ENCODE measurements at regions of chr9 and their contacts with region 1.

Region 1: GRCh38 chr9:125200210-125201047 is at the start of gene RABEPK:
- DNase-seq: peak; percentile 88 to 91 (median 88)
- H3K4me3 ChIP-seq: peak within 1 kb of the TSS; percentile 74 to 92 (median 88)
- H3K4me3 Mint-ChIP-seq: peak within 1 kb of the TSS; percentile 93 to 95
- H3K27ac ChIP-seq: peak within 1 kb of the TSS; percentile 98 to 100
- H3K27ac Mint-ChIP-seq: peak within 1 kb of the TSS; percentile 95 to 99 (median 97)
- H3K4me1 ChIP-seq: peaks cover 11 to 17% of the 10 kb centered on the region in 2 donors
- H3K4me1 Mint-ChIP-seq: peaks cover 11% of the 10 kb centered on the region
- H3K27me3 ChIP-seq: no peaks in the 10 kb centered on the region
- H3K27me3 Mint-ChIP-seq: peaks cover 0 to 3% (median 2%) of the 10 kb centered on the region in 3 donors
- CTCF ChIP-seq: no peak
- polyA plus RNA-seq, gene RABEPK: 9.5 to 18.5 (median 17.5) TPM

Region 2: DNA sequence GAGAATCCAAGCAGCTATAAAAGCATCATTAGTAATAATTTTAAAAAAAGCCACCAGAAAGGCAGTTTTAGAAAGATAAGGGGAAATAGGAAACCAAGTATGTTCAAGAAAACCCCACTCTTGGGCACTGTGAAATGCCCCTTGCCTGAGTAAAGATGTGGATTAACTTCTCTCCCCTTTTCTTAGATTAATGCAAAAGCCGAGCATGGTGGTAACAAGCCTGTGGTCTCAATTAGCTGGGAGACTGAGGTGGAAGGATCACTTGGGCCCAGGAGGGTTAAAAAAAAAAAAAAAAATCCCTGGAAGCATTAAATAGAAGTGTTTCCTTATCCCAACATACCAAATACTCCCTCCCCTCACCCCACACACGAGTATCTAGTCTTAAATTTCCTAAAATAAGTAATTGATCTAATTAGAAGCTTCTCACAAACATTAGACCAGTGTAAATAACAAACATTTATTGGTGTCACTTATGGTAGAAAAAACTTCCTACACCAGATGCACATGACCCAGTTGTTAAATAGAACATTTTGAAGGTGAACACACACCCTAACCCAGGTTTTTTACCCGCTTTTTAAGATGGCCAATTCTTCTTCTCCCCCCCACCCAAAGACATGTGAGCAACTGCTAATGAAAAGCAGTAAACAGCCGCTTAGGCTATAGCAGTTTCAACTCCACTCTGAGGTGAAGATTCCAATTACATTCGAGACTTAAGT is 35.5 kb after region 1 on chr9:
- intact Hi-C with region 1: loop called in 1 of 2 experiments (anchors 5 kb)
- DNase-seq: no peak
- H3K4me3 ChIP-seq: no peak overlapping the region
- H3K4me3 Mint-ChIP-seq: peak overlapping the region in 1 of 2 donors; percentile 24
- H3K27ac ChIP-seq: no peak overlapping the region
- H3K27ac Mint-ChIP-seq: peak overlapping the region in 3 of 7 donors; percentile 1 to 63 (median 24)
- H3K4me1 ChIP-seq: peaks cover 20 to 47% of the 10 kb centered on the region in 2 donors
- H3K4me1 Mint-ChIP-seq: peaks cover 41% of the 10 kb centered on the region
- H3K27me3 ChIP-seq: no peaks in the 10 kb centered on the region
- H3K27me3 Mint-ChIP-seq: no peaks in the 10 kb centered on the region
- CTCF ChIP-seq: no peak